Right ventricle myocardium inferior (tissue), 1 donor: ENCODE measurements at regions of chr18 and their contacts with region 1.

Region 1: GRCh38 chr18:9516437-9517064 is 41.2 kb downstream of the RALBP1 start:
- DNase-seq: no peak
- ATAC-seq: no peak

Region 2: GRCh38 chr18:9079818-9080528 is 436.6 kb before region 1 on chr18:
- intact Hi-C with region 1: loop called (anchors 10 kb)
- DNase-seq: no peak
- ATAC-seq: no peak

Region 3: DNA sequence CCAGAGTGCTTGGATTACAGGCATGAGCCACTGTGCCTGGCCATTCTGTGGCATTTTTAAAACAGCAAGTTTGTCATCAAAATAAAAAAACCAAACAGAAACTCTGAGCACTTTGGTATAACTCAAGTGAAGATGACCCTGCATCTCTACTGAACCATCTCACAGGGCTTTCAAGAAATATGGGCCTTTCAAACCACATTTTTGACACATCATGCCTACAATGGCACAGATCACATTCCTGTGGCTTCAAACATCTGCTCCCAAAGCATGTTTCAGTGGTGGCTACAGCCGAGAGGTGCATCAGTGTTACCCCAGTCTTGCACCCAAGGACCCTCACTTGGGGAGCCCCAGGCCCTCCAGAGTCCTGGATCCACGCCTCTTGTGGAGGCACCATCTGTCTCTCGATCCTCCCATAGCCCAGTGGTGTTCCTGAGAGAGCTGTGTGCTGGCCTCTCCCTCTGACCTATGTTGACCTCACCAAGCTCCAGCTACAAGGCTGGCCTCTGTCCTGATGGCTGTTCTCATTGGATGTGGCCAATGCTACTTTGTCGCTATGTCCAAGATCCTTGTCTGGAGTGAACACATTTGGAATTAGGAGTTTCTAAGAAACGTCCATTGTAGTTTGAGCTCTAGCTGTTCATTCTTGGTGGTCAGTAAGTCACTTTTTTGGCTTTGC is 96.5 kb before region 1 on chr18:
- intact Hi-C with region 1: no loop called
- DNase-seq: no peak
- ATAC-seq: no peak